Naive thymus-derived CD4-positive, alpha-beta T cell (primary cell): ENCODE measurements at regions of chr7 and their contacts with region 1.

Region 1: GRCh38 chr7:101743241-101743994 is 74.0 kb upstream of the CUX1 start:
- DNase-seq: peak; percentile 48 to 77 (median 68)
- ATAC-seq: peak; percentile 82
- H3K4me3 ChIP-seq: peak overlapping the region; percentile 59
- H3K4me3 Mint-ChIP-seq: peak overlapping the region; percentile 76 to 91 (median 84)
- H3K27ac ChIP-seq: no peak overlapping the region
- H3K27ac Mint-ChIP-seq: peak overlapping the region in 2 of 9 donors; percentile 28 to 73
- H3K4me1 ChIP-seq: peaks cover 0 to 17% of the 10 kb centered on the region in 2 donors
- H3K4me1 Mint-ChIP-seq: peaks cover 7 to 48% (median 22%) of the 10 kb centered on the region in 7 donors
- H3K27me3 ChIP-seq: no peaks in the 10 kb centered on the region
- H3K27me3 Mint-ChIP-seq: no peaks in the 10 kb centered on the region

Region 2: DNA sequence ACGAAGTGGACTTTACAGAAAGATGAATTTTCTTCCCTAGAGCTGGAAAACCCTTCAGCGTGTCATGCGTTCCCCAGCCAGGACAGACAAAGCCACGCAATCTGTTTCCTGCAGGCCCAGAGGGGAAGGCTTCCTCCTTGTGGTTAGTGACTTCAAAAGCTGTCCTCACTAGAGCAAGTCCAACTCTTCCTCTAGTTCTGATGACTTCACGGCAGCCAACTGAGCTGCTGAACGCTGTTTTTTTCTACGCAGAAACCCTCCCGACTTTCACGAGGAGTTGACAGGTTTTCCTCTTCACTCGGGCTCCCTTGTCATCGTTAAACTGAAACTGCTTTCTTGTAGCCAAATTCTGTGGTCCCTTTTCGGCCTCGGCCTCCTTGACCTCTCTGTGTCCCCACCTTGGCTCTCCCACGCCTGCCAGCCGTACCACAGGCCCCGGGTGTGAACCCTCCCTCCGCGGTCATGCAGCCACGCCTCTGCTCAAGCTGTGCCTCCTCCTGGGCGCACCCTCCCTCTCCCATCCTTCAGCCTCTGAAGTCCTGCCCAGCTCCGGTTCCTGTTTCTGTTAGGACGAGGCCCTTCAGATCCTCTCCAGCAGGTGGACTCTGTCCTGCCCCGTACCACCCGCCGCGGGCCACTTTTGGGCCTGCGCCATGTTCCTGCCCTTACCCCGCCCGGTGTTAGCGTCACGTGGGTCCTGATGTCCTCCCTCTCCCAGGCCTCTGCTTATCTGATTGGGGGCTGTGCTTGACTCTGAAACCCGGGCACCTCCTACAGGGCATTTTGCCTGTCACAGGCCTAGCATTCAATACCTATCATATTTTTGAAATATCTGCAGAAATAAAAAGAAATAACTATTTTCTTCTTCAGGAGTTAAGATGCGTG is 113.3 kb after region 1 on chr7:
- CTCF ChIA-PET with region 1: interaction called, 4 read pairs
- POLR2A ChIA-PET with region 1: interaction called, 3 read pairs
- intact Hi-C with region 1: loop called in 1 of 2 experiments (anchors 1 kb)
- DNase-seq: peak; percentile 61 to 79 (median 75)
- ATAC-seq: peak; percentile 94
- H3K4me3 ChIP-seq: peak overlapping the region; percentile 76
- H3K4me3 Mint-ChIP-seq: peak overlapping the region; percentile 92 to 100 (median 98)
- H3K27ac ChIP-seq: peak overlapping the region; percentile 75
- H3K27ac Mint-ChIP-seq: peak overlapping the region; percentile 93 to 97 (median 96)
- H3K4me1 ChIP-seq: peaks cover 9 to 14% of the 10 kb centered on the region in 2 donors
- H3K4me1 Mint-ChIP-seq: peaks cover 38 to 68% (median 53%) of the 10 kb centered on the region in 7 donors
- H3K27me3 ChIP-seq: no peaks in the 10 kb centered on the region
- H3K27me3 Mint-ChIP-seq: peaks cover 0 to 3% (median 0%) of the 10 kb centered on the region in 5 donors

Region 3: GRCh38 chr7:102236592-102237287 is 493.3 kb after region 1 on chr7:
- CTCF ChIA-PET with region 1: no interaction called
- POLR2A ChIA-PET with region 1: no interaction called
- intact Hi-C with region 1: loop called in 1 of 2 experiments (anchors 5 kb)
- DNase-seq: peak in 8 of 9 donors; percentile 5 to 57 (median 32)
- ATAC-seq: peak; percentile 61
- H3K4me3 ChIP-seq: no peak overlapping the region
- H3K4me3 Mint-ChIP-seq: no peak overlapping the region
- H3K27ac ChIP-seq: no peak overlapping the region
- H3K27ac Mint-ChIP-seq: no peak overlapping the region
- H3K4me1 ChIP-seq: no peaks in the 10 kb centered on the region
- H3K4me1 Mint-ChIP-seq: peaks cover 0 to 4% (median 0%) of the 10 kb centered on the region in 7 donors
- H3K27me3 ChIP-seq: no peaks in the 10 kb centered on the region
- H3K27me3 Mint-ChIP-seq: no peaks in the 10 kb centered on the region

Region 4: DNA sequence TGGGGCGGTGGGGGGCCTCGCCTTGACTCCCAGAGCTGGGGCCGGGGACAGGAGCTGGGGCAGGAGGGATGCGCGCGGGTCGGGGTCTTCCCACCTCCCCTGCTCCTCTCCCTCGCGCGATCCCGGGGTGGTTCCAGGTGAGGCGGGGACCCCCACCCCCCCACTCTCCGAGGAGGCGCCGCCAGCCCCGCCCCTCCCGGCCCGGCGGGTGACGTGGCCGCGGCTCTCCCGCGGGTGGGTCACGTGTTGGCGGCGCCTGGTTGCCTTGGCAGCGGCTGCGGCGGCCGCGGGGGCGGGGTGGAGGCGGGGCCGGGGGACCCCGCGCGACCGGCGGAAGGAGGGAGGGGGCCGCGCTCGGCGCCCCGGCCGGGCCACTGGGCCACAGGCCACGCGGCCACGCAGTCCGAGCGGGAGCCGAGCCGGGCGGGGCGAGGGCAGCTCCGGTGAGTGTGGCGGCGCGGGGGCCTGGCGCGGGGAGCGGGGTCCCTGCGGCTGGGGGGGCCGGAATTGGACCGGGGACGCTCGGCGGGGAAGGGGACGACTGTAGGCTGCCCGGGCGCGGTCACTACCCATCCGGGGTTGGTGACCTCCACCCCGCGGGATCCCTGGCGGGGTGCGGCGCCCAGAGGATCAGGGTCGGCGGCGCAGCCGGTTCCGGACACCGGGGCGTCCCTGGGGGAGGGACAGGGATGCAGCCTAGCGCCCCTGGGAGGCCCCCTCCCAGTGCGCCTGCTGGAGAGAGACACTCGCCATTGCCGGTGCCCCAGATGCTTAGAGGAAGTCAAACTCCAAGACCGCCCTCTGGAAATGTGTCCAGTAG is 690.0 kb after region 1 on chr7 and contains the start of gene ORAI2:
- CTCF ChIA-PET with region 1: no interaction called
- POLR2A ChIA-PET with region 1: no interaction called
- intact Hi-C with region 1: no loop called
- DNase-seq: peak; percentile 72 to 94 (median 81)
- ATAC-seq: peak; percentile 86
- H3K4me3 ChIP-seq: peak within 1 kb of the TSS; percentile 59
- H3K4me3 Mint-ChIP-seq: peak within 1 kb of the TSS; percentile 76 to 91 (median 88)
- H3K27ac ChIP-seq: peak within 1 kb of the TSS; percentile 96
- H3K27ac Mint-ChIP-seq: peak within 1 kb of the TSS; percentile 97 to 100 (median 99)
- H3K4me1 ChIP-seq: peaks cover 34 to 55% of the 10 kb centered on the region in 2 donors
- H3K4me1 Mint-ChIP-seq: peaks cover 38 to 62% (median 49%) of the 10 kb centered on the region in 7 donors
- H3K27me3 ChIP-seq: no peaks in the 10 kb centered on the region
- H3K27me3 Mint-ChIP-seq: no peaks in the 10 kb centered on the region
- total RNA-seq, gene ORAI2: 19.9 to 72.6 (median 26.2) TPM